ENCODE measurements at regions of chr7 and their contacts with region 1.

Region 1: DNA sequence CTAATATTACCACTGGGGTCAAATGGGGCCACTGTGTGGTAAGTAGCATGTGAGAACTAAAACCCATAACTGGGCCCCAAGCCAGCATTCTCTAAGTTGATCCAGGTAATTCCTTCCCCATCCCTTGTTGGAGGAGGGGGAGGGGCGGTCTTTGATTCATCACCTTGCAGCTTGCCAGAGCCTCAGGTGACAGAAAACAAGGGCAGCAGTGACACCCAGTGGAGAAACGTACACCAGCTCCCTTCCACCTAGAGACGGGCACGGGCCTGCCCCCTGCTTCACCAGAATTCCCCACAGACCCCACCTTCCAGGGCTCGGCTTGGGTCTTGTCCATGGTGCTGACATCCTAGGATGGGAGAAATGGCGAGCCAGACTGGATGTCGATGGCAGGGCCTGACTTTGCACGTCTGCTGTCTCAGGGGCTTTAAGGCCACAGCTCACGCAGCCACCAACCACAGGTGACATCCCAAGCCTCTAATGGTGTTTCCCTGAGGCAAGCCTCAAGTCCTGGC is 102.0 kb downstream of the STRA8 start:
- DNase-seq: peak; percentile 93 to 95
- H3K4me3 ChIP-seq: no peak overlapping the region
- H3K27ac ChIP-seq: no peak overlapping the region
- H3K4me1 ChIP-seq: peaks cover 0 to 4% (median 2%) of the 10 kb centered on the region in 4 experiments; a peak in 5 of 7 replicates
- H3K27me3 ChIP-seq: no peaks in the 10 kb centered on the region
- CTCF ChIP-seq: peak; percentile 90 to 98 (median 95)
- EP300 ChIP-seq: peak in 1 of 2 experiments; percentile 32; a peak in 1 of 3 replicates
- POLR2A ChIP-seq: no peak
- RAD21 ChIP-seq: peak; percentile 99 to 100

Region 2: DNA sequence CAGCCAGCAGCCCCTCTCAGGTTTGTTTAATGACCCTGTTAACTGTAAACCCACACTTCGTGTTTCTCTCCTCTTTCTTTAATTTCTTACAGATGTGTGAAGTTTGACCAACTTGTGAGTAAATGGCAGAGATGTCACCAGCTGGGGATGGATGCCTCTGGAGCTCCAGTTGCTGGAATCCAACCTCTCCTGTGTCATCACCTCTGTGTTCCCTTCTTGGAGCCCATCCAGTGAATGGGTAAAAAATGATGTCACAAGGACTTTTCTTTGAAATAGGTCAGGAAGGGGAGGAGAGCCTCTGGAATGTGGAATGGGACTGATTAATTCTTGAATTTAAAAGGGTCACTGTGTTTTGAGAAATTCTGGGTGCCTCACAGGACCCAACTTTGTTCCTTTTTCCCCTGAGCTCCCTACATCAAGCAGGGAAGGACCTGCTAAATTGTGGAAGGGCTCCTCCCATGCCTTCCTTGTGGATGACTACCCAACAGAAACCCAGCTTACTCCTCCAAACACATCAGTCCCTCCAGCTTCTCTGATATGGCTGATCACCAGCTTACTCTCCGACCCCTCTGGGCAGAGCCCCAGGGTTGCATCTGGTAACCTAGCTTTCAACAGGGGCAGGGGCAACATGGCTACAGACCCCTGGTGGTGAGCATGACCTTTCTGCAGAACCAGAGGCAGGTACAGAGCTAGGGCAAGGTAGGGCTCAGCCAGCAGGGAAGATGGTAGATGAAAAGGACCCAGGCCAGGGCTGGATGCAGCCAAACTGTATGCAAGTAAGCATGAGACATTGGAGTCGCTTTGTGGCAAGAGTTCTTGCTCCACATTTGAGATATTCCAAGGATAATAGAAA is 34.5 kb before region 1 on chr7:
- CTCF ChIA-PET with region 1: interaction called, 11 read pairs
- POLR2A ChIA-PET with region 1: no interaction called
- DNase-seq: no peak
- H3K4me3 ChIP-seq: no peak overlapping the region
- H3K27ac ChIP-seq: no peak overlapping the region
- H3K4me1 ChIP-seq: peaks cover 0 to 6% (median 1%) of the 10 kb centered on the region in 4 experiments; a peak in 1 of 7 replicates
- H3K27me3 ChIP-seq: no peaks in the 10 kb centered on the region
- CTCF ChIP-seq: no peak
- EP300 ChIP-seq: no peak
- POLR2A ChIP-seq: no peak
- RAD21 ChIP-seq: no peak

Region 3: GRCh38 chr7:135320277-135320676 is 15.4 kb before region 1 on chr7:
- CTCF ChIA-PET with region 1: interaction called, 22 read pairs
- POLR2A ChIA-PET with region 1: no interaction called
- DNase-seq: no peak
- H3K4me3 ChIP-seq: no peak overlapping the region
- H3K27ac ChIP-seq: no peak overlapping the region
- H3K4me1 ChIP-seq: no peaks in the 10 kb centered on the region
- H3K27me3 ChIP-seq: no peaks in the 10 kb centered on the region
- CTCF ChIP-seq: no peak
- EP300 ChIP-seq: no peak
- POLR2A ChIP-seq: no peak
- RAD21 ChIP-seq: no peak

Region 4: GRCh38 chr7:135355377-135356042 is 19.8 kb after region 1 on chr7:
- CTCF ChIA-PET with region 1: interaction called, 12 read pairs
- POLR2A ChIA-PET with region 1: no interaction called
- DNase-seq: no peak
- H3K4me3 ChIP-seq: no peak overlapping the region
- H3K27ac ChIP-seq: no peak overlapping the region
- H3K4me1 ChIP-seq: no peaks in the 10 kb centered on the region
- H3K27me3 ChIP-seq: no peaks in the 10 kb centered on the region
- CTCF ChIP-seq: no peak
- EP300 ChIP-seq: no peak
- POLR2A ChIP-seq: no peak
- RAD21 ChIP-seq: no peak